K562 (cell line): ENCODE measurements at regions of chr20 and their contacts with region 1.

Region 1: DNA sequence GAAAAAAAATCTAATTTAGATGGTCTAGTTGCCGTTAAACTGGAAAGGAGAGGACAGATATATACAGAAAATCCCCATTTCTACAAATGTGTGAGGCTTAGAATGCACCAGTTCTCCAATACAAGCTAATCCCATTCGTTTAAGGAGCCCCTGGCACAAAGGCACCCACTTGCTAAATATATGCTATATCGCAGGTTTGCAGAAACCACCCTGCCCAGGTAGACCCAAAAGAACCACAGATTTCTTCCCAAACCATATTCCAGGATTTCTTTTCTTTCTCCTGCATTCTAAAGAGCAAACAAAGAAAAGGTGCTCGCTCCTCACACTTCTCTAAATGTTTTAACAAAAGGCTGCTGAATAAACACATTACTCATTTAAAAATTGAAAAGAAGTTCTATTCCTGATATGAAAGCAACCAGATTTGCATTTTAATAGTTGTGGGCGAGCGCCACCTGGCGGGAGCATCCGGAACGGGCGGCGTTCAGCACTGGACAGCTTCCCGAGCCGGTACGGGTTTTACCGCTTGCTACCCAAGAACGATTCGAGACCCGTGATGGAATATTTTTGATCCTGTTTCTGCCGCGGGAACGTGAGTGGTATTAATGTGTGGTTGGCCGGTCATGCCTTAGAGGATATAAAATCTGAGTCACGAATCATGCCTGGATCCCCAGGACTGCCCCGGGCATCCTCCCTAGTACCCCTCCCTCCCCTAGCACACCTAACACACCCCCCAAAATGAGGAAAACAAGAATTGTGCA is 2.1 kb downstream of the PTPRT start:
- DNase-seq: peak; percentile 73 to 81 (median 79)
- ATAC-seq: peak; percentile 88
- H3K4me3 ChIP-seq: no peak overlapping the region
- H3K27ac ChIP-seq: no peak overlapping the region
- H3K4me1 ChIP-seq: no peaks in the 10 kb centered on the region
- H3K27me3 ChIP-seq: peaks cover 4 to 5% of the 10 kb centered on the region in 2 experiments; a peak in 3 of 5 replicates
- CTCF ChIP-seq: peak; percentile 81 to 92 (median 92)
- EP300 ChIP-seq: no peak
- POLR2A ChIP-seq: no peak
- RAD21 ChIP-seq: peak; percentile 79 to 84

Region 2: DNA sequence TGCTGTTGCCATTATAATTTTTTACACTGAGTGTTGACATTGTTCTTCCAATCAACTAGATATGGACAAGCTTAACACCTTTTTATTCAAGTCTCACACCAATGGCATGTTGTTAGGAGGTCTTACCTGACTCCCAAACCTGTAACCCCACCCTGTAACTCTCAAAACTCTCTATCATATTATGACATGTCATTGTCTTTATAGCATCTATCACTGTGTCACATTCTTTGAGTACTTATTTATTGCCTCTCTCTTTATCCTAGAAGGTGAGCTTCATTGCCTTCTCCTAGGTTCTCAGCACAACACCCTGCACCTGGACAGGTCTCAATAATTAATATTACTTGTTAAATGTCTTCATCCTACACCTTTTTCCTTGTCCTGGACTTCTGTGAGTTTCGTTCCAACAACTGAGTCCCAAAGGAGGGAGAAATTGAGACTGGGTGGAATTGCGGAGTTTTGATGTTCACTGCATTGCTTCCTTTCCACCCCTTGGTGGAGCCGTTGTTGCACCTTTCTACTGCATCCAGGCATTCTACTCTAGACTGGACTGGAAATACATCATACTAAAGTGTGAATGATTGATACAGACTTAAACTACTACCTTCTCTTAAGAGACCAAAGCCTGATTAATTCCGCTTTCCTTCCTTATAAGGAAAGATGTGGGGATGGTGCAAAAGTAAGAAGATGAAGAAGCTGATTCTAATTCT is 1231.5 kb before region 1 on chr20:
- CTCF ChIA-PET with region 1: no interaction called
- POLR2A ChIA-PET with region 1: no interaction called
- in situ Hi-C with region 1: loop called (anchors 10 kb)
- intact Hi-C with region 1: loop called (anchors 5 kb)
- DNase-seq: peak; percentile 33 to 50 (median 42)
- ATAC-seq: peak; percentile 89
- H3K4me3 ChIP-seq: no peak overlapping the region
- H3K27ac ChIP-seq: no peak overlapping the region
- H3K4me1 ChIP-seq: no peaks in the 10 kb centered on the region
- H3K27me3 ChIP-seq: no peaks in the 10 kb centered on the region; a peak in 1 of 5 replicates
- CTCF ChIP-seq: peak; percentile 62 to 80 (median 72)
- EP300 ChIP-seq: no peak
- POLR2A ChIP-seq: no peak
- RAD21 ChIP-seq: peak; percentile 52 to 78

Region 3: GRCh38 chr20:42024634-42025033 is 1163.0 kb before region 1 on chr20:
- CTCF ChIA-PET with region 1: no interaction called
- POLR2A ChIA-PET with region 1: no interaction called
- in situ Hi-C with region 1: no loop called
- intact Hi-C with region 1: loop called (anchors 10 kb)
- DNase-seq: peak in 2 of 4 experiments; percentile 13 to 25
- ATAC-seq: no peak
- H3K4me3 ChIP-seq: no peak overlapping the region
- H3K27ac ChIP-seq: no peak overlapping the region
- H3K4me1 ChIP-seq: no peaks in the 10 kb centered on the region
- H3K27me3 ChIP-seq: no peaks in the 10 kb centered on the region
- CTCF ChIP-seq: no peak
- EP300 ChIP-seq: no peak
- POLR2A ChIP-seq: no peak
- RAD21 ChIP-seq: no peak

Region 4: GRCh38 chr20:42587427-42587826 is 600.2 kb before region 1 on chr20:
- CTCF ChIA-PET with region 1: no interaction called
- POLR2A ChIA-PET with region 1: no interaction called
- in situ Hi-C with region 1: no loop called
- intact Hi-C with region 1: no loop called
- DNase-seq: no peak
- ATAC-seq: no peak
- H3K4me3 ChIP-seq: no peak overlapping the region
- H3K27ac ChIP-seq: no peak overlapping the region
- H3K4me1 ChIP-seq: no peaks in the 10 kb centered on the region
- H3K27me3 ChIP-seq: no peaks in the 10 kb centered on the region
- CTCF ChIP-seq: no peak
- EP300 ChIP-seq: no peak
- POLR2A ChIP-seq: no peak
- RAD21 ChIP-seq: no peak

Region 5: GRCh38 chr20:43337036-43337435 is 149.4 kb after region 1 on chr20:
- CTCF ChIA-PET with region 1: no interaction called
- POLR2A ChIA-PET with region 1: no interaction called
- in situ Hi-C with region 1: no loop called
- intact Hi-C with region 1: no loop called
- DNase-seq: no peak
- ATAC-seq: no peak
- H3K4me3 ChIP-seq: no peak overlapping the region
- H3K27ac ChIP-seq: no peak overlapping the region
- H3K4me1 ChIP-seq: no peaks in the 10 kb centered on the region
- H3K27me3 ChIP-seq: peaks cover 2 to 19% of the 10 kb centered on the region in 2 experiments; a peak in 3 of 5 replicates
- CTCF ChIP-seq: no peak
- EP300 ChIP-seq: no peak
- POLR2A ChIP-seq: no peak
- RAD21 ChIP-seq: no peak